ENCODE measurements at regions of chr1 and their contacts with region 1.

Region 1: DNA sequence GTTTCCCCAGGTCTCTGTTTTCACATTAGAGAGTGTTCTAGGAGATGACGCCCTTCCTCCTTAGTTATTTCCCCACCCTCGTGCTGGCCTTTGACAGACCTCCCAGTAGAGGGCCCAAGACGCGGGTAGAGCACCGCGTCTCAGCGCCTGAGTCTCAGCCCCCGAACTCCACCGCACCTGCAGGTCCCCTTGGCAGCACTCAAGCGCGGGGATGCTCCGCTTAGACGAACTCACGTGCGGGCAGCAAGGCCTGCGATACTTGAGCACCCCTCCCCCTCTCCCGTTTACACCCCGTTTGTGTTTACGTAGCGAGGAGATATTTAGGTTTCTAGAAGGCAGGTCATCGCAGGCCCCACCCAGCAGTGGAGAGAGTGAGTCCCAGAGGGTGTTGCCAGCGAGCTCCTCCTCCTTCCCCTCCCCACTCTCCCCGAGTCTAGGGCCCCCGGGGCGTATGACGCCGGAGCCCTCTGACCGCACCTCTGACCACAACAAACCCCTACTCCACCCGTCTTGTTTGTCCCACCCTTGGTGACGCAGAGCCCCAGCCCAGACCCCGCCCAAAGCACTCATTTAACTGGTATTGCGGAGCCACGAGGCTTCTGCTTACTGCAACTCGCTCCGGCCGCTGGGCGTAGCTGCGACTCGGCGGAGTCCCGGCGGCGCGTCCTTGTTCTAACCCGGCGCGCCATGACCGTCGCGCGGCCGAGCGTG is at the start of gene CD55:
- DNase-seq: peak; percentile 100
- H3K4me3 ChIP-seq: peak within 1 kb of the TSS; percentile 74 to 100 (median 92)
- H3K27ac ChIP-seq: peak within 1 kb of the TSS; percentile 95 to 97
- H3K4me1 ChIP-seq: peaks cover 21 to 49% (median 27%) of the 10 kb centered on the region in 4 experiments
- H3K27me3 ChIP-seq: no peaks in the 10 kb centered on the region

Region 2: GRCh38 chr1:207304710-207305151 is 16.5 kb before region 1 on chr1:
- CTCF ChIA-PET with region 1: no interaction called
- POLR2A ChIA-PET with region 1: no interaction called
- DNase-seq: no peak
- H3K4me3 ChIP-seq: no peak overlapping the region
- H3K27ac ChIP-seq: no peak overlapping the region
- H3K4me1 ChIP-seq: peaks cover 4 to 14% (median 10%) of the 10 kb centered on the region in 4 experiments
- H3K27me3 ChIP-seq: no peaks in the 10 kb centered on the region

Region 3: DNA sequence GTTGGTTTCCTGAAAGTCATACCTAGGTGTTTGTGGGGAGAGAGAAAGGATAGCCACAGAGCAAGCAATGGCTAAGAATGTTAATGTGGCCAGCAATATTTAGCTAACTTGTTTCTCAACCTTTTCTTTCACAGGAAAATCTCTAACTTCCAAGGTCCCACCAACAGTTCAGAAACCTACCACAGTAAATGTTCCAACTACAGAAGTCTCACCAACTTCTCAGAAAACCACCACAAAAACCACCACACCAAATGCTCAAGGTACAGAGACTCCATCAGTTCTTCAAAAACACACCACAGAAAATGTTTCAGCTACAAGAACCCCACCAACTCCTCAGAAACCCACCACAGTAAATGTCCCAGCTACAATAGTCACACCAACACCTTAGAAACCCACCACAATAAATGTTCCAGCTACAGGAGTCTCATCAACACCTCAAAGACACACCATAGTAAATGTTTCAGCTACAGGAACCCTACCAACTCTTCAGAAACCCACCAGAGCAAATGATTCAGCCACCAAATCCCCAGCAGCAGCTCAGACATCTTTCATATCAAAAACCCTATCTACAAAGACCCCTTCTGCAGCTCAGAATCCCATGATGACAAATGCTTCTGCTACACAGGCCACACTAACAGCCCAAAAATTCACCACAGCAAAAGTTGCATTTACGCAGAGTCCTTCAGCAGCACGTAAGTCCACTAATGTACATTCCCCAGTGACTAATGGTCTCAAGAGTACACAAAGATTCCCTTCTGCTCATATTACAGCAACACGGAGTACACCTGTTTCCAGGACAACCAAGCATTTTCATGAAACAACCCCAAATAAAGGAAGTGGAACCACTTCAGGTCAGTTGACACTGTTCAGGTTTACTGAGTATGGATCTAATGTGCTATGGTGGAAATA is 15.6 kb after region 1 on chr1:
- CTCF ChIA-PET with region 1: interaction called, 8 read pairs
- POLR2A ChIA-PET with region 1: interaction called, 11 read pairs
- DNase-seq: peak; percentile 39 to 88 (median 78)
- H3K4me3 ChIP-seq: no peak overlapping the region
- H3K27ac ChIP-seq: peak overlapping the region in 1 of 2 experiments; percentile 56
- H3K4me1 ChIP-seq: peaks cover 10 to 25% (median 17%) of the 10 kb centered on the region in 4 experiments
- H3K27me3 ChIP-seq: no peaks in the 10 kb centered on the region

Measured in common myeloid progenitor, CD34-positive (primary cell).